Activated CD4-positive, alpha-beta memory T cell treated with anti-CD3 and anti-CD28 coated beads for 36 hours (primary cell): ENCODE measurements at regions of chr19 and their contacts with region 1.

Region 1: DNA sequence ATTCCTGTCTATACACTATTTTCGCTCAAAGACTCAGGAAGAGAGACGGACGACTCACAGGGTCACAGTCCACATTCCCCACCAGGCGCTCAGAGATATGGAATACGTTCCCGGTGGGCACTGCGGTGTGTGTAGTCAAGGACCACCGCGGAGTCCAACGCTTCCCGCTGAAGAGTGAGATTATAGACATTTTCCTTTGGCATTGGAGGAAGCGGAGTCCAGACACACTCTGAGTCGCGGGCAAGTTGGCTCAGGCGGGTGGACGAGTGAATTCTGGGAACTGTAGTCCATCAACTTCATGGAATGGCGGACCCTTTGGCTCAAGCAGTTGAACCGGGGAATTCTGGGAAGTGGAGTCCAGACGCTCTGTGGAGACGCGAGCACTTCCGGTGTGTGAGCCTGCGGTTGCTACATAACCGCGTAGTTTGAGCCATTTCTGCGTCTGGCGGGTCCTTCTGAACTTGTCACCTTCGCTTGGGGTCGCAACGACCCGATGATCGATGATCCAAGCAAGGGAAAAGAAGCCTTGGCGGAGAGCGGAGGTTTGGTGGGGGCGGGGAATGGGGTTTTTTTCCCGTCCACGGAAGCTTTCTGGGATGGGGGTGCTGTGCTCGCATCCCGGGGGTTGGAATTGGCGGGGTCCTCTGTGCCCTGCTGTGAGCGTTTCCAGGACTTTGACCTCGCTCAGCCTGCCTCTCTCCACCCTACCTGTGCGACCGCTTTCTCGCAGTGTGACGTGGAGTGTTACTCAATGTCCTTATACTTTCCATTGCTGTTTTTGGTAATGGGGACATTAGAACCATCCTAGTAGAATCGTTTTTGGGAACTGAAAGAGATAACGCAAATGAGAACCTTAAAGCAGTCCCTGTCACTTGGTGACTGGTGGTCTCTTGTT is at the start of gene ZNF230:
- DNase-seq: peak; percentile 91
- H3K4me3 Mint-ChIP-seq: peak within 1 kb of the TSS; percentile 99
- H3K27ac Mint-ChIP-seq: peak within 1 kb of the TSS; percentile 94
- H3K4me1 Mint-ChIP-seq: peaks cover 18% of the 10 kb centered on the region
- H3K27me3 Mint-ChIP-seq: no peaks in the 10 kb centered on the region
- total RNA-seq, gene ZNF230: 3.8 TPM

Region 2: DNA sequence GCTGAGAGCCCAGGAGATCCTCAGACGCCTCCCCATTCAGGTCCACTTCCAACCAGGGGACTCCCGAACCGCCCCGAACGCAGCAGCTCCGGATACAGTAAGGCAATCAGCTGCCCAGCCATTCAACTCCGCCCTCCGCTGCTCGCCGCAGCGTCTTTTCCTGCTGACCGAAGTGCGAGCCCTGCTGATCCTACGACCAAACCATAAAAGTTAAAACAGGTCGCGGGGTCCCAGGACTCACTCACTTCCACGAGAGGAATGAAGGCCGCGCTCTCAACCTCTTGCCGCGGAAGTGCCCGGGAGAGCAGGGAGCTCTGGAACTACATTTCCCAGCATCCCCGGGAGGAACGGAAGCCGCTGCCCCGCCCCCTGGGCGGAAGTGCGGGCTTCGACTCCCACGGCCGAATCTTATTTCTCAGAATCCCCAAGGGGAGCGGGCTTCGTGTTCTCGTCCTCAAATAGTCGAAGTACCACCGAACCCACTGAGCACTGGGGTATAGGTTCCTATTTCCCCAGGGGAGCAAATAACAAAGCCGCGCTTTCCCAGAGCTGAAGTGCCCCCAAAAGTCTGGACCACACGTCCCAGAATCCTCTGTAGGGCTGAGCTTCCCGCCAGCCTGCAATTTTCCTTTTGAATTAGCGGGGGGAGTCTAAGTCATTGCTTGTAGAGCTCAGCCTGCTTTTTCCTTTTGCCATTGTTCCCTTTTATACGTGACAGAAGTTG is 67.7 kb before region 1 on chr19 and contains the start of gene ZNF45:
- CTCF ChIA-PET with region 1: interaction called, 3 read pairs
- POLR2A ChIA-PET with region 1: no interaction called
- intact Hi-C with region 1: loop called (anchors 1 kb)
- DNase-seq: peak; percentile 92
- H3K4me3 Mint-ChIP-seq: peak within 1 kb of the TSS; percentile 93
- H3K27ac Mint-ChIP-seq: peak within 1 kb of the TSS; percentile 81
- H3K4me1 Mint-ChIP-seq: peaks cover 9% of the 10 kb centered on the region
- H3K27me3 Mint-ChIP-seq: no peaks in the 10 kb centered on the region
- total RNA-seq, gene ZNF45: 7.7 to 9.6 TPM

Region 3: DNA sequence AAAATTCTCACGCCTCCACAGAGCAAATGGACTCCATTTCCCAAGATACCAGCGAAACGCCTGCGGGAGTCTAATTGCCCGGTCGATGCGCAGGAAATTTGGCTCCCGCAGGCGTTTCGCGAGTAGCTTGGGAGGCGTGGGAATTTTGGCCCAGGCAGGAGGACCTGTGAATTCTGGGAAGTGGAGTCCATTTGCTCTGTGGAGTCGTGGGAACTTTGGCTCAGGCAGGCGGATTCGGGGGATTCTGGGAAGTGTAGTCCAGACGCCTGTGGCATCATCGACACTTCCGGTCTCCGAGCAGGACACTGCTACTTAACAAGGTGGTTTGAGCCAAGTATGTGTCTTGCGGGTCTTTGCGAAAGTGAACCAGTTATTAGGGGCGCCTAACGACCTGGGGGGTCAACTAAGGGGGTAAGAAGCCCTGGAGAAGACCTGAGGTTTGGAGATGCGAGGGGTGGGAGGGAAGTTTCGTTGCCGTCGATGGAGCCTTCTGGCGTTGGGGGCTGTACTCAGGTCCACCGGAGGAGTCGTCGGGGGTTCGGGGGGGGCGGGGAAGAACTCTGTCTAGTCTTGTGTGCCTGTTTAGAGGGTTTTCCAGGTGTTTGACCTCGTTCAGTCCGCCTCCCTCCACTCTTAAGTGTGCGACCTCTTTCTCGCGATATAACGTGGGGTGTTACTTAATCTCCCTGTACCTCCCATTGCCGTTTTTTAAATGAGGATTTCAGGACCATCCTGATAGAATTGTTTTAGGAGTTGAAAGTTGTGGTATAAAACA is 18.7 kb before region 1 on chr19 and contains the start of gene ZNF155:
- CTCF ChIA-PET with region 1: no interaction called
- POLR2A ChIA-PET with region 1: no interaction called
- intact Hi-C with region 1: loop called (anchors 1 kb)
- DNase-seq: peak; percentile 84
- H3K4me3 Mint-ChIP-seq: peak within 1 kb of the TSS; percentile 97
- H3K27ac Mint-ChIP-seq: peak within 1 kb of the TSS; percentile 89
- H3K4me1 Mint-ChIP-seq: peaks cover 7% of the 10 kb centered on the region
- H3K27me3 Mint-ChIP-seq: no peaks in the 10 kb centered on the region
- total RNA-seq, gene ZNF155: 2.9 to 4.5 TPM

Region 4: DNA sequence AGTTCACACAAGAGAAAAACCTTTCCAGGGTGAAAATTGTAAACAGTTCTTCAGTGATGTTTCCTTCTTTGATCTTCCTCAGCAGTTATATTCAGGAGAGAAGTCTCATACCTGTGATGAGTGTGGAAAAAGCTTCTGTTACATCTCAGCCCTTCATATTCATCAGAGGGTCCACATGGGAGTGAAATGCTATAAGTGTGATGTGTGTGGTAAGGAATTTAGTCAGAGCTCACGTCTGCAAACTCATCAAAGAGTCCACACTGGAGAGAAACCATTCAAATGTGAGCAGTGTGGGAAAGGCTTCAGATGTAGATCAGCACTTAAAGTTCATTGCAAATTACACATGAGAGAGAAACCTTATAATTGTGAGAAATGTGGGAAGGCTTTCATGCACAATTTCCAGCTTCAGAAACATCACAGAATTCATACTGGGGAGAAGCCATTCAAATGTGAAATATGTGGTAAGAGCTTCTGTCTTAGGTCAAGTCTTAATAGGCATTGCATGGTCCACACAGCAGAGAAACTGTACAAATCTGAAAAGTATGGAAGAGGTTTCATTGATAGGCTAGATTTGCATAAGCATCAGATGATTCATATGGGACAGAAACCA is 29.3 kb after region 1 on chr19:
- CTCF ChIA-PET with region 1: no interaction called
- POLR2A ChIA-PET with region 1: no interaction called
- intact Hi-C with region 1: no loop called
- DNase-seq: no peak
- H3K4me3 Mint-ChIP-seq: no peak overlapping the region
- H3K27ac Mint-ChIP-seq: no peak overlapping the region
- H3K4me1 Mint-ChIP-seq: no peaks in the 10 kb centered on the region
- H3K27me3 Mint-ChIP-seq: no peaks in the 10 kb centered on the region

Region 5: DNA sequence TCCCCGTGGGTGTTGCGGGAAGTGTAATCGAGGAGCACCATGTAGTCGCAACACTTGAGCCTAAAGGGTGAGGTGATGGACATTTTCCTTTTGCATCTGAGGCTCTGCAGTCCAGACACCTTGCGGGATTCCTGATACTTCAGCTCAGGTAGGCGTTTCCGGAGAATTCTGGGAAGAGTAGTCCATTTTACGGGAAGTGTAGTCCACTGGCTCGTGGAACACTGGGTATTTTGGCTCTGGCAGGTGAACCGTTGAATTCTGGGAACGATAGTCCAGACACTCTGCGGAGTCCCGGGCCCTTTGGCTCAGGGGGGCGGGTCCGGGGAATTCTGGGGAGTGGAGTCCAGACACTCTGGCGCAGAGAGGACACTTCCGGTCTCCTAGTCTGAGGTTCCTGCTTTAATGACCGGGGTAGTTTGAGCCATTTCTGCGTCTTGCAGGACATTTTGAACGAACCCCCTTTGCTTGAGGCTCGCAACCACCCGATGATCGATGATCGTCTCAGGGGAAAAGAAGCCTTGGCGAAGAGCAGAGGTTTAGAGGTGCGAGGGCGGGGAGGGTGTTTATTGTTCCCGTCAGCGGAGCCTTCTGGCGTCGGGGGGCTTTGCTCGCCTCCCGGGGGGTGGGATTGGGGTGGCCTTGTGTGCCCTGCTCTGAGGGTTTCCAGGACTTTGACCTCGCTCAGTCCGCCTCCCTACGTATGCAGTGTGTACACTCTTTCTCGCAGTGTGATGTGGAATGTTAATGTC is 49.0 kb after region 1 on chr19 and contains the start of gene ZNF223:
- CTCF ChIA-PET with region 1: no interaction called
- POLR2A ChIA-PET with region 1: no interaction called
- intact Hi-C with region 1: loop called (anchors 1 kb)
- DNase-seq: peak; percentile 69
- H3K4me3 Mint-ChIP-seq: peak within 1 kb of the TSS; percentile 82
- H3K27ac Mint-ChIP-seq: peak within 1 kb of the TSS; percentile 49
- H3K4me1 Mint-ChIP-seq: peaks cover 14% of the 10 kb centered on the region
- H3K27me3 Mint-ChIP-seq: peaks cover 7% of the 10 kb centered on the region
- total RNA-seq, gene ZNF223: 0.55 to 0.73 TPM

Region 6: GRCh38 chr19:44113138-44113783 is 110.4 kb after region 1 on chr19 and contains the start of gene ZNF225:
- CTCF ChIA-PET with region 1: no interaction called
- POLR2A ChIA-PET with region 1: interaction called, 3 read pairs
- intact Hi-C with region 1: loop called (anchors 1 kb)
- DNase-seq: peak; percentile 92
- H3K4me3 Mint-ChIP-seq: peak within 1 kb of the TSS; percentile 91
- H3K27ac Mint-ChIP-seq: peak within 1 kb of the TSS; percentile 74
- H3K4me1 Mint-ChIP-seq: peaks cover 22% of the 10 kb centered on the region
- H3K27me3 Mint-ChIP-seq: no peaks in the 10 kb centered on the region
- total RNA-seq, gene ZNF225: 2.5 to 2.9 TPM

Region 7: GRCh38 chr19:44212250-44212865 is 209.5 kb after region 1 on chr19 and contains the start of gene ZNF227:
- CTCF ChIA-PET with region 1: no interaction called
- POLR2A ChIA-PET with region 1: no interaction called
- intact Hi-C with region 1: loop called (anchors 5 kb)
- DNase-seq: peak; percentile 89
- H3K4me3 Mint-ChIP-seq: peak within 1 kb of the TSS; percentile 91
- H3K27ac Mint-ChIP-seq: peak within 1 kb of the TSS; percentile 88
- H3K4me1 Mint-ChIP-seq: peaks cover 23% of the 10 kb centered on the region
- H3K27me3 Mint-ChIP-seq: no peaks in the 10 kb centered on the region
- total RNA-seq, gene ZNF227: 13.5 TPM